ENCODE measurements at regions of chr19 and their contacts with region 1.

Region 1: GRCh38 chr19:47745010-47745901 is at the start of gene NOP53:
- DNase-seq: peak; percentile 98
- H3K4me3 ChIP-seq: peak within 1 kb of the TSS; percentile 66 to 87 (median 80)
- H3K27ac ChIP-seq: peak within 1 kb of the TSS; percentile 78
- H3K4me1 ChIP-seq: peaks cover 21% of the 10 kb centered on the region
- H3K27me3 ChIP-seq: no peaks in the 10 kb centered on the region
- CTCF ChIP-seq: no peak
- POLR2A ChIP-seq: peak; percentile 85
- total RNA-seq, gene NOP53: 150 and 189 TPM in 2 replicates

Region 2: GRCh38 chr19:47729992-47730889 is 15.0 kb before region 1 on chr19:
- CTCF ChIA-PET with region 1: interaction called, 6 read pairs
- POLR2A ChIA-PET with region 1: interaction called, 4 read pairs
- dilution Hi-C with region 1: no loop called
- intact Hi-C with region 1: loop called (anchors 1 kb)
- DNase-seq: peak; percentile 93
- H3K4me3 ChIP-seq: peak overlapping the region in 1 of 3 experiments; percentile 18
- H3K27ac ChIP-seq: peak overlapping the region; percentile 97
- H3K4me1 ChIP-seq: peaks cover 23% of the 10 kb centered on the region
- H3K27me3 ChIP-seq: no peaks in the 10 kb centered on the region
- CTCF ChIP-seq: no peak
- POLR2A ChIP-seq: peak; percentile 21

Measured in endothelial cell of umbilical vein (primary cell).